Mucosa of descending colon (tissue), 3 donors: ENCODE measurements at regions of chr17 and their contacts with region 1.

Region 1: DNA sequence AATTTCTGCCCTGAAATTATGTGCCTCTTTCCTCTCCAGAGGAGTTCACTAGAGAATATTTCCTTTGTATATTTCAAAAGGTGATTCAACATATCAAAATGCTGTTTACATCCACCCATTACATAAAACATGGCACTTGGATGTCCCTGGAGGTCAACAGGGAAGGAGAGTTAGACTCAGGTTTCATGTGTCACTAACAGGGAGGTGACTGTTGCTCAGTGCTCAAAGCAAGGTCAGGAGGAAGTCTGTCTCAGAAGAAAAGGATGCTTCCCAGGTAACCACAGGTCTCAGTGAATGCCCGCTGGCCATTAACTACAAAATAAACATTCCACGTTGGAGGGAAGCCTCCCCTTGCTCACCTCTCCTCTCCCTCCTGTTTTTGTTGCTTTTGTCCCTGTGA is 198.6 kb downstream of the AXIN2 start:
- DNase-seq: no peak
- ATAC-seq: peak; percentile 27
- H3K4me3 ChIP-seq: no peak overlapping the region
- H3K4me1 ChIP-seq: peaks cover 12% of the 10 kb centered on the region
- CTCF ChIP-seq: no peak

Region 2: GRCh38 chr17:65418628-65419027 is 55.8 kb after region 1 on chr17:
- intact Hi-C with region 1: loop called in 1 of 2 experiments (anchors 10 kb)
- DNase-seq: peak in 2 of 3 donors; percentile 39 to 45
- ATAC-seq: peak; percentile 40
- H3K4me3 ChIP-seq: no peak overlapping the region
- H3K4me1 ChIP-seq: peaks cover 6% of the 10 kb centered on the region
- CTCF ChIP-seq: no peak

Region 3: DNA sequence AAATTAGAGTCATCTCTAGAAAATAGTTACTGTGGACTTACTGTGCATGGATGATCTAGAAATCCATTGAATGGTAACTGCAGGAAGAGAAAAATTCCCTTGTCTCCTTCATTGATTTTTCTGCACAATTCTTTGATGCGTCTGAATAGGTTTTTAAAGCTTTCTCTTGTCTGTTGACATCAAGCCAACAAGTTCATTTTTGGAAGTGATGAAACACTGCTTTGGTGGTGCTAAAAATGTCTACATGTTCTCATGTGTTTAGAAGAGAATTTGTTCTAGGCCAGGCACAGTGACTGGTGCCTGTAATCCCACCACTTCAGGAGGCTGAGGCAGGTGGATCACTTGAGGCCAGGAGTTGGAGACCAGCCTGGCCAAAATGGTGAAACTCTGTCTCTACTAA is 255.7 kb after region 1 on chr17:
- intact Hi-C with region 1: no loop called
- DNase-seq: no peak
- ATAC-seq: no peak
- H3K4me3 ChIP-seq: no peak overlapping the region
- H3K4me1 ChIP-seq: no peaks in the 10 kb centered on the region
- CTCF ChIP-seq: no peak